Posterior vena cava (tissue), 2 donors: ENCODE measurements at regions of chr6 and their contacts with region 1.

Region 1: GRCh38 chr6:22875845-22876244 is 306.5 kb downstream of the HDGFL1 start:
- DNase-seq: no peak

Region 2: DNA sequence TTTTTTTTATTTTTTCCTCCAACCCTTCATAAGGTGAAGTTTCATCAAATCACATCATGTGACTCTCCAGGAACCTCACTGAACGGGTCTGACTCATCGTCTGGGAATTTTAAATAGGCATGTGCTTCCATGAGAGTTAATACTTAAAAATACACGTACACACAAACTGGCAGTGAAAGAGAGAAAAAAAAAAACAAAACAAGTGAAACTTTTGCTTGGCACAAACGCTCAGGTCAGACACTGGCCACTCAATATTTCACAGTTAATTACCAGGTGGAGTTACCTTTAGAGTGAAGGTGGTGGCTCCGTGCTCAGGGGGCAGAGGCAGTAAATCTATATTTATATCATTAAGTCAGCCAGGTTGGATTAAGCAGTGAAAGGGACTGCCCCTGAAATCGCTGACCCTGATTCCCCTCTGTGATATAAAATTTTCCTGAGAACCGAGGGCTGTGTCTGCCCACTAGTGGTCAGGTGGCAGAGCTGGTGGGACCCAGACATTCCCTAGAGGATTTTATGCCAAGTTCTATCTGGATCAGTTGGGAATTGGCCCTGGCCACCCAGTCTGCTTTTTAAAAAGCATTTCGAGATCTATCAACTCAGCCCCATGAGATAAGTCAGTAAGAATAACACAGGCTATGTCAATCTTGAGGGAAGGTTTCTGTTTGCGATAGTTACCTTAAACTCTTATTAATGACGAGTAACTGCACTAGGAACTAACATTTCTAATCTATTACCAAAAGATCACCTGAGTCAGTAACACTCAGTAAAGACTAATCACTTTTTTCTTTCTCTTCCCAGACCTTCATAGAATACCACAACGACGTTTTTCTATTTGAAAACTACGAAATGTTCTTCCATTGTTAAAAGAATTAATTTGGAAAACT is 47.4 kb before region 1 on chr6:
- intact Hi-C with region 1: loop called in 1 of 2 experiments (anchors 2 kb)
- DNase-seq: no peak